ENCODE measurements at regions of chr14 and their contacts with region 1.

Region 1: DNA sequence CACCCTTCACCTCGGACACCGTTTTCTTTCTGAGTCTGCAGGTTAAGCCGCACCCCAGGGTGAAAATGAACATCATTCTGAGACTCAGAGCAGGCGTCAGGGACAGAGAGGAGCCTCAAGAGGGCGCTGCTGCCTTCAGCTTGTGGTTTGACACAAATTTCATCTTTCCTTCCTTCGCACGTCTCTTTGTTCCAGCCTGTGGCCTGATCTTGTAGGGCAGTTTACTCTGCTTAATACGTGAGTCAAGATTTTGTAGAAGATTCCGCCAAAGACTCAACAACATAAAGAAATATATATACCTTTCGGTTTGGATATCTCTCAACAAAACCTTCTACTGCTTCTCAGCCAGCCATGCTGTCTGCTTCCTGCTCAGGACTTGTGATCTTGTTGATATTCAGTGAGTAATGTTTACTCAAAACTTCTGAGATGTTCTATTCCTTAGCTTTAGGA is 329.3 kb upstream of the OR4E1 start:
- DNase-seq: peak; percentile 16
- ATAC-seq: peak; percentile 84
- H3K4me3 ChIP-seq: no peak overlapping the region
- H3K27ac ChIP-seq: no peak overlapping the region
- H3K4me1 ChIP-seq: no peaks in the 10 kb centered on the region
- H3K27me3 ChIP-seq: no peaks in the 10 kb centered on the region
- CTCF ChIP-seq: peak; percentile 28 to 83 (median 82); a peak in 5 of 6 replicates
- POLR2A ChIP-seq: no peak
- RAD21 ChIP-seq: peak; percentile 20; the same call in 1 of the 2 replicates

Region 2: GRCh38 chr14:21978184-21978998 is 24.5 kb before region 1 on chr14:
- CTCF ChIA-PET with region 1: interaction called, 16 read pairs
- POLR2A ChIA-PET with region 1: no interaction called
- RAD21 ChIA-PET with region 1: no interaction called
- intact Hi-C with region 1: no loop called
- DNase-seq: peak; percentile 16
- ATAC-seq: peak; percentile 78
- H3K4me3 ChIP-seq: no peak overlapping the region
- H3K27ac ChIP-seq: no peak overlapping the region
- H3K4me1 ChIP-seq: no peaks in the 10 kb centered on the region
- H3K27me3 ChIP-seq: peaks cover 26% of the 10 kb centered on the region
- CTCF ChIP-seq: peak in 2 of 3 experiments; percentile 93 to 94; a peak in 4 of 6 replicates
- POLR2A ChIP-seq: no peak
- RAD21 ChIP-seq: peak; percentile 31; the same call in 1 of the 2 replicates

Region 3: DNA sequence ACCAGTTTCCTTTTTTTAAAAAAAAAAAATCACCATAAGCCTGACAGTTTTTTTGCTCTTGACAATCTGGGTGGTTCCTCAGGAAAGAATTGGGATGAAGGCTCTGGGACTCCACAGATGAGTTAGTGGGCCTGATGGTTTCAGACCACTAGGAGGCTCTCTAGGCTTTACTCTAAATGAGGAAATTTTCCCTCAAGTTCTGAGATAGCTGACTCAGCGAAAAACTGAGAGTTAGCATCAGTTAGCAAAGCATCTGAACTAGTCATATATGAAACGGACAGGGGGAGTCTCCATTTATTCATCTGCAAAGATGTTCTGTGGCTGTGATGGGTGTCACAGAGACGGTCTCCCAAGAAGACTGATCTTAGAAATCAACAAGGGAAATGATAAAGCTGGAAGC is 14.9 kb before region 1 on chr14:
- CTCF ChIA-PET with region 1: interaction called, 33 read pairs
- POLR2A ChIA-PET with region 1: no interaction called
- RAD21 ChIA-PET with region 1: no interaction called
- intact Hi-C with region 1: no loop called
- DNase-seq: peak; percentile 45
- ATAC-seq: peak; percentile 80
- H3K4me3 ChIP-seq: no peak overlapping the region
- H3K27ac ChIP-seq: no peak overlapping the region
- H3K4me1 ChIP-seq: no peaks in the 10 kb centered on the region
- H3K27me3 ChIP-seq: peaks cover 24% of the 10 kb centered on the region; the same call in 1 of the 2 replicates
- CTCF ChIP-seq: peak; percentile 10 to 76 (median 69); a peak in 4 of 6 replicates
- POLR2A ChIP-seq: no peak
- RAD21 ChIP-seq: peak; percentile 14; the same call in 1 of the 2 replicates